Motor neuron (in vitro differentiated cells): ENCODE measurements at regions of chr3 and their contacts with region 1.

Region 1: DNA sequence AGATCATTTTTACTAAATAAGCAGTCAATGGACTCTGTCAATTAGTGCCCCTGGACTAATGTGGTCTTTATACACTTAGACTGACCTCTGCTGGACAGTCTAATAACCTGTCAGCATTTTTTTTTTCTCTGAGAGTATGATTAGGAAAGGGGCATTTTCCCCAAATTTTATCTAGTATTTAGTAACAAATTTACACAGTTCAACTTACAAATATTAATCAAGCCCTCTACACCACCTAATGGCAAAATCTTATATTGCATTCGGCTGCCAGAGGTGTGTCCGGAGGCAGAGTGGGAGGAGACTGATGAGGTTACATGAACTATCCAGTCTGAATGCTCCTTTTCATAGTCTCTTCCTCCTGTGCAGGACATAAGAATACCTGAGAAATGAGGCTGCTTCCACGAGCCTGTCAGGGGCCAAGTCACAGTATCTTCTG is 36.0 kb upstream of the COLQ start:
- ATAC-seq: peak; percentile 52 to 97 (median 88)
- H3K4me3 ChIP-seq: no peak overlapping the region
- H3K27ac ChIP-seq: no peak overlapping the region
- H3K4me1 ChIP-seq: no peaks in the 10 kb centered on the region

Region 2: GRCh38 chr3:15332405-15333098 is 225.0 kb before region 1 on chr3 and contains the start of gene SH3BP5:
- in situ Hi-C with region 1: no loop called
- ATAC-seq: peak; percentile 58 to 95 (median 92)
- H3K4me3 ChIP-seq: peak within 1 kb of the TSS; percentile 56 to 94 (median 80)
- H3K27ac ChIP-seq: peak within 1 kb of the TSS; percentile 69 to 73
- H3K4me1 ChIP-seq: peaks cover 16 to 17% of the 10 kb centered on the region in 2 donors
- total RNA-seq, gene SH3BP5: 14.3 to 140 (median 38.9) TPM

Region 3: GRCh38 chr3:15427182-15427880 is 130.2 kb before region 1 on chr3 and contains the starts of genes EAF1 and METTL6:
- in situ Hi-C with region 1: loop called in 3 of 9 experiments (anchors 10 to 25 kb)
- ATAC-seq: peak; percentile 82 to 98 (median 98)
- H3K4me3 ChIP-seq: peak within 1 kb of the TSS; percentile 89 to 100 (median 99)
- H3K27ac ChIP-seq: peak within 1 kb of the TSS; percentile 84 to 91
- H3K4me1 ChIP-seq: peaks cover 11 to 26% of the 10 kb centered on the region in 2 donors
- total RNA-seq, gene EAF1: 16.8 to 34.4 (median 26.7) TPM
- total RNA-seq, gene METTL6: 25.0 to 41.6 (median 25.5) TPM

Region 4: DNA sequence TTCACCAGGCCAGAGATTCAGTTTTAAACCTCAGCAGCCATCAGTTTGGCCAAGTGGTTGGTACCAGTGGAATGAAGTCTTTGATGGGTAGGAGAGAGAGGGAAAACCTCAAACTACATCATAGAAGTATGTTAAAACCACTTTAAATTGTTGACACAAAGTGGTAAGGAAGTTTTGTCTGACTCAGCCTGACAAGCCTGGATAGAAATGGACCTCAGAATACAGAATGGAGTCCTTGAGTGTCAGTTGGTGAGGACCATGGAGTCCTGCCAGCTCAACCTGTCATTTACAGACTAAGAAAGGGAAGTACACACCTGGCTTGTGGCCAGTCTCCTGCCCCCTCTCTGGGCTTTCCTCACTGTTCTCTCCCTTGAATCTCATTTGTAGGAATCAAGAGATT is 118.1 kb before region 1 on chr3:
- in situ Hi-C with region 1: loop called in 3 of 9 experiments (anchors 10 to 25 kb)
- ATAC-seq: no peak
- H3K4me3 ChIP-seq: no peak overlapping the region
- H3K27ac ChIP-seq: no peak overlapping the region
- H3K4me1 ChIP-seq: no peaks in the 10 kb centered on the region